Dendritic cell treated with granulocyte-macrophage colony-stimulating factor and Interleukin-4, amounts not matched to agents 40 ng/mL and 50 ng/mL, for 4 days (primary cell): ENCODE measurements at regions of chr16 and their contacts with region 1.

Region 1: DNA sequence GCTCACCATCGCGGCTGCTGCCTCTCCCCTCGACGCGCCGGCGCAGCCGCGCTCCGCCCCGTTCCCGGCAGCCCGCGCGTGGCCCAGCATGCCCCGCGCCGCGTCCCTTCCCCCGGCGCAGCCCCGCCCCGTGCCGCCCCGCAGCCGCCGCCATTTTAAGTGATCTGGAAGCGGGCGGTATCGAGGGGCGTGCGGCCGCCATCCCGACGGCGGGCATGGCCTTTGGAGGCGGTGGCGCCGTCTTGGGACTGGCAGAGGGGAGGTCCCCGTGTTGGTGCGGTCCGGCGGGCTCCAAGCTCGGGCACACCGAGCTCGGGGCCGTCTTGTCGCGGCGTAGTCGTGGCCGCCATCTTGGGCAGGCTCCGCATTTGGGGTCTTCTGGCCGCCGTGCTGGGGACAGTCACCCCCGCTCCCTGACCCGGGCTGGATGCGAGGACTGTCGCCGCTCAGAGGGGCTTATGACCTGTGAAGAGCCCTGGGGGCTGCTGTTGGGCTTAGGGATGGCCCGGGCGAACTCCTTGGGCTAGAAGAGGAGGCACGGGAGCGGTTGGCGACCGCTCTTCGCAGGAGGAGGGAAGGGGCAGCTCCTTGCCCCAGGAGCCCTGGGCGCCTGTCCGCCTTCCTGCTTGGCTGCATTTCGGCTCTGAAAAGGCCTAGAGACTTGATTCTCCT is at the start of gene ELOB:
- H3K4me3 Mint-ChIP-seq: peak within 1 kb of the TSS; percentile 90
- H3K27ac Mint-ChIP-seq: peak within 1 kb of the TSS; percentile 99
- H3K4me1 Mint-ChIP-seq: peaks cover 58% of the 10 kb centered on the region
- H3K27me3 Mint-ChIP-seq: peaks cover 2% of the 10 kb centered on the region

Region 2: GRCh38 chr16:2795714-2796143 is 18.4 kb after region 1 on chr16:
- intact Hi-C with region 1: loop called (anchors 1 kb)
- H3K4me3 Mint-ChIP-seq: no peak overlapping the region
- H3K27ac Mint-ChIP-seq: peak overlapping the region; percentile 93
- H3K4me1 Mint-ChIP-seq: peaks cover 73% of the 10 kb centered on the region
- H3K27me3 Mint-ChIP-seq: peaks cover 2% of the 10 kb centered on the region

Region 3: DNA sequence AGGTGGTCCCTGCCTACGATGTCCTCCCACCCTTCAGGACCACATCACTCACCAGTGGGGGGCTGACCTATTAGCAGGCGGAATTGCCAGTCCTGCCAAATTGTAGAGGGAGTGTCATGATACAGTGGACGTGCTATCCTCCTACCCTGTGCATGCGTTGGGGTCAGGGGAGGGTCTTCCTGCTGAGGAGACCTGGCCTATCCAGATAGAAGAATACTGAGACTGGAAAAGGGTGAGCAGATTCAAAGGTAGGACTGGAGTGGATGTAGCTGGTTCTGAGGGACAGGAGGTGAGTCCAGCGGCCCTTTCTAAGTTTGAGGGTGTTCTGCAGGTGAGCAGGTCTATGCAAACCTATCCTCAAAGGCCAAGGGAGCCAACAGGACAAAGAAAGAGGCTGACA is 28.9 kb after region 1 on chr16:
- intact Hi-C with region 1: no loop called
- H3K4me3 Mint-ChIP-seq: no peak overlapping the region
- H3K27ac Mint-ChIP-seq: no peak overlapping the region
- H3K4me1 Mint-ChIP-seq: peaks cover 7% of the 10 kb centered on the region
- H3K27me3 Mint-ChIP-seq: peaks cover 49% of the 10 kb centered on the region

Region 4: DNA sequence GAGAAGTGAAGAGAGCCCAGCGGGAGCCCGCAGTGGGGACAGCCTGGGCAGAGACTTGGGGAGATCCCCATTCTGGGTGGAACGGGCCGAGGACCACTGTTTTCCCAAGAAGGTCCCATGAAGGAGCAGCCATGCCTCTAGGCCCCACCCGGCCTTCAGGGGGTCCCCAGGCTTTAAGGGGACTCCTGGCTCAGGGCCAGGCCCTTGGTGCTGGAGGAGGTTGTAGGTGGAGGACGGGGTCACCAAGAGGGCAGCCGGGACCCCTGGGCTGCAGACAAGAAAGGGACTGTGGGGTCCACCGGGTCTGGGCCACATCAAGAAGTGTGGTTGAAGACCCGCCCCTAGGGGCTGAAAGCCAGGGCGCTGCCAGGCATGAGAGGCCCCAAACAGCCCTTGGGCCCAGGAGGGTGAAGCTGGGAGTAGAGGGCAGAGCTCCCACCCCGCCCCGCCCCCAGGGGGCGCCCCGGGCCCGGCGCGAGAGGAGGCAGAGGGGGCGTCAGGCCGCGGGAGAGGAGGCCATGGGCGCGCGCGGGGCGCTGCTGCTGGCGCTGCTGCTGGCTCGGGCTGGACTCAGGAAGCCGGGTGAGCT is 39.5 kb after region 1 on chr16 and contains the start of gene PRSS21:
- intact Hi-C with region 1: loop called (anchors 5 kb)
- H3K4me3 Mint-ChIP-seq: peak within 1 kb of the TSS; percentile 63
- H3K27ac Mint-ChIP-seq: peak within 1 kb of the TSS; percentile 76
- H3K4me1 Mint-ChIP-seq: peaks cover 40% of the 10 kb centered on the region
- H3K27me3 Mint-ChIP-seq: peaks cover 7% of the 10 kb centered on the region